Right cardiac atrium (tissue), 5 donors: ENCODE measurements at regions of chr4 and their contacts with region 1.

Region 1: DNA sequence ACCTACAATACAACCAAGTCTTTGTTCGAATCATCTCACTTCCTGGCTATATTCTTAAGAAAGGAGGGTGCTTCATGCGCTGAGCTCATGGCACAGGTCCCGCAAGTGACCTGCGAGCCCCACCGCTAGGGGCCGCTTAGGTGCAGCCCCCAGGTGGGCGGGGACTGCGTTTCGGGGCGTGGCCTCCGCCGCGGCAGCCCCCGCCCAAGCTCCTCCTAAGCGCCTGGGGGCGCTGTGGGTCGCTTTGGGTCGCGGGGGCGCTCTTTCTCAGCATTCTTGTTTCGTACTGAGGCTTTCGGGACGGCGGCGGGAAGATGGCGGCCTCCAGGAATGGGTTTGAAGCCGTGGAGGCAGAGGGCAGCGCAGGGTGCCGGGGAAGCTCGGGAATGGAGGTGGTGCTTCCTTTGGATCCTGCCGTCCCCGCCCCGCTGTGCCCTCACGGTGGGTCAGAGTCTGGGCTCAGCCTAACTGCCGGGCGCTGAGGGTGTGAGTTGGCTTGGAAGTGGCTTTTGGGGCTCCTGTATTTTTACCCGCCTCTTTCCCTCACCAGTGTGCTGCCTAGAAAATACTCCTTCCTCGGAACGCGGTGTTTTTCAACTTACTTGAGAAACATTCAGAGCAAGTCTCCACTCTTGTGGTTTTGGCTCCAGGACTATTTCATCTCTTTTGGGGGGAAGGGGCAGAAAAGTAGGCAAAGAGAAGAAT is at the start of gene ZCCHC4:
- DNase-seq: peak; percentile 90 to 95 (median 95)
- ATAC-seq: peak; percentile 97
- H3K4me3 ChIP-seq: peak within 1 kb of the TSS; percentile 61
- H3K27ac ChIP-seq: peak within 1 kb of the TSS; percentile 42
- H3K4me1 ChIP-seq: no peaks in the 10 kb centered on the region
- H3K27me3 ChIP-seq: no peaks in the 10 kb centered on the region
- total RNA-seq, gene ZCCHC4: 8.3 to 12.7 (median 11.1) TPM

Region 2: DNA sequence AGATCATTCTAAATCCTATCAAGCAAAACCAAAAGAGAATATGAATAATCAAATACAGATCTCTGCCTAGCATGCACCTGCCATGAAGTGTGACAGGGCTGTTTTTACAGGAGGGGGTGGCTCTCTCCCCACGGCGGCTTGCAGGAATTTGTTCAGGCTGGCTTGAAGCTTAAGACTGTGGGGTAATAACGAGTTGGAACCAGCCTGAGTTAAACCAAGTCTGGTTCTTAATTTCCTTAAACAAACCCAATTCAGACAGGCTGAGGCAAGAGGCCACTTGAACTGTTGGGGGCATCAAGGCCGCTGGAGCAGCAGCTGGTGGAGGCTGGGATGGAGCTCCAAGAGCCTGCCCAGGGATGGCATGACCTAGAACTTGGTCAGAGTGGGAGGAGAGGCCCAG is 236.8 kb before region 1 on chr4:
- intact Hi-C with region 1: no loop called
- DNase-seq: peak in 1 of 3 donors; percentile 20
- ATAC-seq: no peak
- H3K4me3 ChIP-seq: no peak overlapping the region
- H3K27ac ChIP-seq: no peak overlapping the region
- H3K4me1 ChIP-seq: no peaks in the 10 kb centered on the region
- H3K27me3 ChIP-seq: no peaks in the 10 kb centered on the region

Region 3: GRCh38 chr4:25234390-25235370 is 78.0 kb before region 1 on chr4:
- intact Hi-C with region 1: loop called in 1 of 4 experiments (anchors 10 kb)
- DNase-seq: peak in 2 of 3 donors; percentile 56 to 73
- ATAC-seq: peak; percentile 75 to 77
- H3K4me3 ChIP-seq: peak overlapping the region; percentile 93
- H3K27ac ChIP-seq: peak overlapping the region; percentile 98
- H3K4me1 ChIP-seq: no peaks in the 10 kb centered on the region
- H3K27me3 ChIP-seq: no peaks in the 10 kb centered on the region

Region 4: DNA sequence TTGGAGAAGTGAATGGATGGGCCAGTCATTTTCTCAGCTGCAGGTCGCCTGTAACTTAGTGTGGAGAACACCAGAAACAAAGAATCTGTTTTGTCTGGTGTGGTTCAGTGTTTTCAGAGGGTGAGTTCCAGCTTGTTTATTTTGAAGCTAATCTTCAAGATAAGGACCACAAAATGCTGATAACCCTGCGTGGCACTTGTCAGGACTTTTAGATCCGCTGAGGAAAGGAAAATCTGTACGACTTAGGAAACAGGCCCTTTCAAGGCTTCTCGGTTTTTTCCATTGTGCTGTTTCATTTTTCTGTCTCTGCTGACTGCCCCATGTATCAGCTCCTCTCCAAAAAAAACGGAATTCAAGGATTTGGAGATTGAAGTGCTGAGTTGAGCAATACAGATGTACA is 55.7 kb after region 1 on chr4:
- intact Hi-C with region 1: loop called in 1 of 4 experiments (anchors 2 kb)
- DNase-seq: no peak
- ATAC-seq: peak; percentile 88 to 90
- H3K4me3 ChIP-seq: no peak overlapping the region
- H3K27ac ChIP-seq: no peak overlapping the region
- H3K4me1 ChIP-seq: no peaks in the 10 kb centered on the region
- H3K27me3 ChIP-seq: no peaks in the 10 kb centered on the region

Region 5: DNA sequence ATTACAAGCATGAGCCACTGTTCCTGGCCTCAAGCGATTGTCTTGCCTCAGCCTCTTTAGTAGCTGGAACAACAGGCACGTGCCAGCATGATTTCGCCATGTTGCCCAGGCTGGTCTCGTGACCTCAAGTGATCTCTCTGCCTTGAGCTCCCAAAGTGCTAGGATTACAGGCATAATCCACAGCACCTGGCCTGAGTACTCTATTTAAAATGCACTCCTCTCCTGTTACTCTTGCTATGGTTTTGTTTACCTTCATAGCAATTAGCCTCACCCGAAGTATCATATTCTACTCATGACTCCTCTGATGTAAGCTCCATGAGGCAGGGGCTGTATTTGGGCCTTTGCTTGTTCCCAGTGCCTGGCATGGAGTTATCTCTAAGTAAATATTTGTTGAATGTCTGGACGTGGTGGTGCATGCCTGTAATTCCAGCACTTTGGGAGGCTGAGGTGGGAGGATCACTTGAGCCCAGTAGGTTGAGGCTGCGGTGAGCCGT is 250.5 kb after region 1 on chr4:
- intact Hi-C with region 1: no loop called
- DNase-seq: no peak
- ATAC-seq: no peak
- H3K4me3 ChIP-seq: no peak overlapping the region
- H3K27ac ChIP-seq: no peak overlapping the region
- H3K4me1 ChIP-seq: no peaks in the 10 kb centered on the region
- H3K27me3 ChIP-seq: no peaks in the 10 kb centered on the region